ENCODE measurements at regions of chr12 and their contacts with region 1.

Region 1: GRCh38 chr12:29317556-29318363 is 63.2 kb downstream of the ERGIC2 start:
- DNase-seq: peak; percentile 15 to 80
- ATAC-seq: peak; percentile 96 to 100 (median 100)
- H3K4me3 ChIP-seq: no peak overlapping the region
- H3K4me3 Mint-ChIP-seq: no peak overlapping the region
- H3K27ac ChIP-seq: no peak overlapping the region
- H3K27ac Mint-ChIP-seq: peak overlapping the region in 1 of 2 donors; percentile 35
- H3K4me1 ChIP-seq: no peaks in the 10 kb centered on the region
- H3K4me1 Mint-ChIP-seq: peaks cover 11 to 14% of the 10 kb centered on the region in 2 donors
- H3K27me3 ChIP-seq: no peaks in the 10 kb centered on the region
- H3K27me3 Mint-ChIP-seq: no peaks in the 10 kb centered on the region
- CTCF ChIP-seq: peak; percentile 71

Region 2: DNA sequence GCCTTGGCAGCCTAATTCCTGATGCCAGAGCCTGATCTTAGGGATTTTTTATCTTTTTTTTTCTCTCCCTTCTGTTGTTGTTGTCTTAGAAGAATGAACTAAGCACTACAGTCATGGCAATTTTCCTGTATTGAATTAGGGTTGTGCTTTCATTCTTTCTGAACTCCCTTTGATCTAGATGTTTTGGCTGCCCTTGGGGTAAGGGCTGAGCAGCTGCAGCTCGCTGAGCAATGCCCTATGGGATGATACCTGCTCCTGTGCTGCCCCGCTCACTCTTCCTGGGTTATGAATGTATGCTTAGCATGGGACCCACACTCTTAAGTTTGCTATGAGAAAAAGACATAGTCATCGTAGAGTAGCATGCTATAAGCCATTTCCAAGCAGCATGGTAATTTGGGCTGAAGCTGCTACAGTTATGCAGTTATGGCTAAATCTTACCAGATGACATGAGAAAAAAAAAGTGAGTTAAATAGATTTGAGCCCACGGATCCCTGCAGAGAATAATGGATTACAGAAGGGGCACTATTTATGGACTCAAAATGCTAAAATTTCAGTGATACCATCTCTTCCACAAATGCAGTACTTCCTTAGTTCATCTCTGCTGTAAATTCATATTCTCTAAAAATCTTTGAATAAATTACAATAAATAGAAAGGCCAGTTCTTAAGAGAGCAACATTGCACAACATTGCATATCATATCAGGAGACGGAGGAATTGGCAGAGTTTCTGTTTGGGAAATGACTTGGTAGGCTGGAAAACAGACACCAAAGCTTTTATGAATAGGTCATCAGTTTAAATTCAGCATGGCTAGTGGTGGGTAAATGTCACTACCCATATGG is 1266.0 kb before region 1 on chr12:
- intact Hi-C with region 1: no loop called
- DNase-seq: no peak
- ATAC-seq: no peak
- H3K4me3 ChIP-seq: no peak overlapping the region
- H3K4me3 Mint-ChIP-seq: no peak overlapping the region
- H3K27ac ChIP-seq: no peak overlapping the region
- H3K27ac Mint-ChIP-seq: no peak overlapping the region
- H3K4me1 ChIP-seq: no peaks in the 10 kb centered on the region
- H3K4me1 Mint-ChIP-seq: no peaks in the 10 kb centered on the region
- H3K27me3 ChIP-seq: no peaks in the 10 kb centered on the region
- H3K27me3 Mint-ChIP-seq: peaks cover 0 to 4% of the 10 kb centered on the region in 2 donors
- CTCF ChIP-seq: no peak

Region 3: DNA sequence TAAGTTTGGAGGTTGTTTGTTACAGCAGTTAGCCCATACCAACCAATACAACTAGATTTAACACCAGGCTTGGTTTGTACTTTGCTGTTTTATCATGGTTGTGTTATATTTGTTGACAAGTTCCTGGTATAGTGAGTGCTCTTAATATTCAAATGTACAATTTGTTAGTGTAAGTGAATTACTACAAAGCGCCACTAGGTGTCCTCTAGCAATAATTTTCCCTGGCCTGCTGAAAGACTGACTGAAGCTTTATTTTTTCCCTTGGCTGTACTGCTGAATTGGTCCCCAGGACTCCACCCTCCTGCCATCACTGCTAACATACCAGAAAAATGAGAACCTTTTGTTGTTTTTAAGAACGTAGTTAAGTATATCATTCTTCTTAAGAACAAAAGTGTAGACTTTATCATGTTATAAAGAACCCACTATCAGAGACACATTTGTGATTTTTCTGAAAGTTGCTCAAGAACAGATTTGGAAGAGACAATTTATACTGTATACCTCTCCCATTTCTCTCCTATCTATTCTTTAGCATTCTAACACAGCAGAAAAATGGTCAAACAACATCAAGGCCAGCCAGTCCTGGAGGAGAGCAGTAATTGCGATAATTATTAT is 244.0 kb before region 1 on chr12:
- intact Hi-C with region 1: loop called (anchors 1 kb)
- DNase-seq: peak in 1 of 2 donors; percentile 65
- ATAC-seq: peak; percentile 66 to 71 (median 67)
- H3K4me3 ChIP-seq: no peak overlapping the region
- H3K4me3 Mint-ChIP-seq: no peak overlapping the region
- H3K27ac ChIP-seq: no peak overlapping the region
- H3K27ac Mint-ChIP-seq: no peak overlapping the region
- H3K4me1 ChIP-seq: no peaks in the 10 kb centered on the region
- H3K4me1 Mint-ChIP-seq: no peaks in the 10 kb centered on the region
- H3K27me3 ChIP-seq: no peaks in the 10 kb centered on the region
- H3K27me3 Mint-ChIP-seq: peaks cover 5 to 13% of the 10 kb centered on the region in 2 donors
- CTCF ChIP-seq: peak; percentile 69

Region 4: DNA sequence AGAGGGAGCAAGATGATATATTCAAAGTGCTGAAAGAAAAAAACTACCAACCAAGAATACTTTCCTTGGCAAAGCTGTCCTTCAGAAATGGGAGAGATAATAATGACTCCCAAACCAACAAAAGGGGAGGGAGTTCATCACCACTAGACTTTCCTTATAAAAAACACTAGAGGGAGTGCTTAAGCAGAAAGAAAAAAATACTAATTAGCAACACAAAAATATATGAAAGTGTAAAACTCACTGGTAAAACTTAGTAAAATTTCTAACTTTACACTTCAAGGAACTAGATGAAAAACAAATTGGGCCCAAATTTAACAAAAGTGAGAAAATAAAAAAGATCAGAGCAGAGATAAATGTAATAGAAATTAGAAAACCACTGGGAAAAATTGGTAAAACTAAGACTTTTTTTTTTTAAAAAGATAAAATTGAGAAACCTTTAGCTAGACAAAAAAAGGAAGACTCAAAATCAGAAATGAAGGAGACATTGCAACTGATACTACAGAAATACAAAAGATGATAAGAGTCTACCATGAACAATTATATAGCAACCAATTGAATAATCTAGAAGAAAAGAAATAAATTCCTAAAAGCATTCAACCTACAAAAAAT is 229.0 kb before region 1 on chr12:
- intact Hi-C with region 1: loop called (anchors 1 kb)
- DNase-seq: peak in 1 of 2 donors; percentile 41
- ATAC-seq: no peak
- H3K4me3 ChIP-seq: no peak overlapping the region
- H3K4me3 Mint-ChIP-seq: no peak overlapping the region
- H3K27ac ChIP-seq: no peak overlapping the region
- H3K27ac Mint-ChIP-seq: no peak overlapping the region
- H3K4me1 ChIP-seq: no peaks in the 10 kb centered on the region
- H3K4me1 Mint-ChIP-seq: no peaks in the 10 kb centered on the region
- H3K27me3 ChIP-seq: no peaks in the 10 kb centered on the region
- H3K27me3 Mint-ChIP-seq: peaks cover 7 to 13% of the 10 kb centered on the region in 2 donors
- CTCF ChIP-seq: peak; percentile 61

Region 5: GRCh38 chr12:29492891-29493290 is 175.1 kb after region 1 on chr12:
- intact Hi-C with region 1: no loop called
- DNase-seq: no peak
- ATAC-seq: no peak
- H3K4me3 ChIP-seq: no peak overlapping the region
- H3K4me3 Mint-ChIP-seq: no peak overlapping the region
- H3K27ac ChIP-seq: no peak overlapping the region
- H3K27ac Mint-ChIP-seq: no peak overlapping the region
- H3K4me1 ChIP-seq: no peaks in the 10 kb centered on the region
- H3K4me1 Mint-ChIP-seq: no peaks in the 10 kb centered on the region
- H3K27me3 ChIP-seq: no peaks in the 10 kb centered on the region
- H3K27me3 Mint-ChIP-seq: peaks cover 12 to 26% of the 10 kb centered on the region in 2 donors
- CTCF ChIP-seq: no peak